CD4-positive, alpha-beta T cell (primary cell): ENCODE measurements at regions of chr14 and their contacts with region 1.

Region 1: DNA sequence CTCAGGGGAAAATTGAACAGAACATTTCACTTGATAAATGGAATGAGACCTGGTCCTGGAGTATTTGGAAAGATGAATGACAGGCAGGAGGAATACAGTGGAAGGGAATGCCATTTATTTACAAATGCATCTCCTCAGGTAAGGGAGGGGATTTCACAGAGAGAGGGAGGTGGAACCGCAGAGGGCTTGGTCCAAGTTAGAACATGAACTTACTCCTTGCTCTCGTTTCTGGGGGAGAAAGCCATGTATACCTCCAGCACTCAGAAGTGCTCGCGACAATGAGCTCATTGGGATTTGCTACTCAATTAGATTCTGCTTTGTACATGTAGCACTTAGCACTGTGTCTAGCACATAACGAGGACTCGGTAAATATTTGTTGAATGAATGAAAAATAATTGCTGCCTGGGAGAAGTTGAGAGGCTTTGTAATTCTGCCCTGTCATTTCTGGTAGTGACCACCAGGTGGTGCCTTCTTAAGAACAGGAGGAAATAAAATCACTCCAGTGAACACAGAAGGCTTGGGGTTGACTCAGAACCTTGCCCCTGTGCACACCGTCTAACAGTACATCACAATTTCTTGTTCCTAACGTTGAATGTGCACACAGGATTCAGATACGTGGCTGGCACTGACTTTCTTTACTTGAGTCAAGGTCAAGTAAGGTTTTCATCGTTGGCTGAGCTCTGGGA is 91.6 kb downstream of the RGS6 start:
- DNase-seq: peak in 8 of 14 experiments; percentile 0 to 53 (median 10)
- ATAC-seq: no peak
- H3K4me3 ChIP-seq: no peak overlapping the region
- H3K4me3 Mint-ChIP-seq: no peak overlapping the region
- H3K27ac ChIP-seq: no peak overlapping the region
- H3K27ac Mint-ChIP-seq: no peak overlapping the region
- H3K4me1 ChIP-seq: no peaks in the 10 kb centered on the region
- H3K4me1 Mint-ChIP-seq: no peaks in the 10 kb centered on the region
- H3K27me3 ChIP-seq: peaks cover 0 to 10% of the 10 kb centered on the region in 2 experiments
- H3K27me3 Mint-ChIP-seq: peaks cover 46% of the 10 kb centered on the region
- CTCF ChIP-seq: peak; percentile 67

Region 2: GRCh38 chr14:72377016-72377415 is 353.2 kb after region 1 on chr14:
- CTCF ChIA-PET with region 1: no interaction called
- POLR2A ChIA-PET with region 1: no interaction called
- intact Hi-C with region 1: no loop called
- DNase-seq: no peak
- ATAC-seq: no peak
- H3K4me3 ChIP-seq: no peak overlapping the region
- H3K4me3 Mint-ChIP-seq: no peak overlapping the region
- H3K27ac ChIP-seq: no peak overlapping the region
- H3K27ac Mint-ChIP-seq: no peak overlapping the region
- H3K4me1 ChIP-seq: no peaks in the 10 kb centered on the region
- H3K4me1 Mint-ChIP-seq: no peaks in the 10 kb centered on the region
- H3K27me3 ChIP-seq: peaks cover 0 to 4% of the 10 kb centered on the region in 2 experiments
- H3K27me3 Mint-ChIP-seq: peaks cover 19% of the 10 kb centered on the region
- CTCF ChIP-seq: no peak

Region 3: DNA sequence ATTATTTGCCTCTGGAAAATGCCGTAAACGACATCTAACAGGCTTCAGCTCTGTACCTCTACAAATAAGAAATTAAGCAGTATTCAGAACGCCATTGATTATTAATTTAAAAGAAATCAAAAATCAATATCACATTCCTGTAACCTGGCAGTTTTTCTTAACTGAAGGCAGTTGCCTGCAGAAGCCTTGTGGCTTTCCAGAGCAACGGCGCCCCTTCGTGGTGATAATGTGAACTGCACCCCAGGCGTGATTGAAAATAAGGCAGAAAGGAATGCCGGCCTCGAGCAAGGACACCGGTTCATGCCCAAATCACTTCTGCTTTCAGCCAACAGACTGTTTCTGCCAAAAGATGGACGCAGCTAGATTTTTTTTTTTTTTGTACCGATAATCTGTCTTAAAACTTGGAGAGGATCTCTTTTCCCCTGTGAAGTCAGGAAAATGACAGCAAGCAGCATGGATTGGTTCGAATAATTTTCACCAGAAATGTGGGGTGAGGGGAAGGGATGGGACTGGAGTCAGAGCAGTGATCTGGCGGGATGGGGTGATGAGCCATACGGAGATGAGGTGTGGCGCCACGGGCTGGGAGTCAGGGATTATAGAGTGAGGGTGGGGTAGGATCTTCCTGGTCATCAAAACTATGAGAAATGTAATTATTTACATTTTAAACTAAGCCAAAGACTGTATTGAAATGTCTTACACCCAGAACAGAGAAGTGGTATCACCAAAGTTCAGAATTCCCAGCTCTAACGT is 397.0 kb after region 1 on chr14:
- CTCF ChIA-PET with region 1: no interaction called
- POLR2A ChIA-PET with region 1: no interaction called
- intact Hi-C with region 1: loop called (anchors 2 to 10 kb)
- DNase-seq: peak; percentile 33 to 67 (median 52)
- ATAC-seq: peak; percentile 34
- H3K4me3 ChIP-seq: no peak overlapping the region
- H3K4me3 Mint-ChIP-seq: no peak overlapping the region
- H3K27ac ChIP-seq: no peak overlapping the region
- H3K27ac Mint-ChIP-seq: no peak overlapping the region
- H3K4me1 ChIP-seq: peaks cover 3% of the 10 kb centered on the region
- H3K4me1 Mint-ChIP-seq: no peaks in the 10 kb centered on the region
- H3K27me3 ChIP-seq: no peaks in the 10 kb centered on the region
- H3K27me3 Mint-ChIP-seq: no peaks in the 10 kb centered on the region
- CTCF ChIP-seq: peak; percentile 69

Region 4: GRCh38 chr14:72904840-72905561 is 881.1 kb after region 1 on chr14:
- CTCF ChIA-PET with region 1: no interaction called
- POLR2A ChIA-PET with region 1: no interaction called
- intact Hi-C with region 1: loop called in 1 of 2 experiments (anchors 2 kb)
- DNase-seq: peak in 13 of 14 experiments; percentile 37 to 84 (median 50)
- ATAC-seq: peak; percentile 79
- H3K4me3 ChIP-seq: no peak overlapping the region
- H3K4me3 Mint-ChIP-seq: no peak overlapping the region
- H3K27ac ChIP-seq: no peak overlapping the region
- H3K27ac Mint-ChIP-seq: no peak overlapping the region
- H3K4me1 ChIP-seq: no peaks in the 10 kb centered on the region
- H3K4me1 Mint-ChIP-seq: no peaks in the 10 kb centered on the region
- H3K27me3 ChIP-seq: peaks cover 4 to 8% of the 10 kb centered on the region in 2 experiments
- H3K27me3 Mint-ChIP-seq: peaks cover 18% of the 10 kb centered on the region
- CTCF ChIP-seq: peak; percentile 86

Region 5: GRCh38 chr14:73365727-73366126 is 1341.9 kb after region 1 on chr14:
- CTCF ChIA-PET with region 1: no interaction called
- POLR2A ChIA-PET with region 1: no interaction called
- intact Hi-C with region 1: no loop called
- DNase-seq: no peak
- ATAC-seq: no peak
- H3K4me3 ChIP-seq: no peak overlapping the region
- H3K4me3 Mint-ChIP-seq: no peak overlapping the region
- H3K27ac ChIP-seq: no peak overlapping the region
- H3K27ac Mint-ChIP-seq: no peak overlapping the region
- H3K4me1 ChIP-seq: no peaks in the 10 kb centered on the region
- H3K4me1 Mint-ChIP-seq: no peaks in the 10 kb centered on the region
- H3K27me3 ChIP-seq: no peaks in the 10 kb centered on the region
- H3K27me3 Mint-ChIP-seq: no peaks in the 10 kb centered on the region
- CTCF ChIP-seq: no peak